ENCODE measurements at regions of chr12 and their contacts with region 1.

Region 1: DNA sequence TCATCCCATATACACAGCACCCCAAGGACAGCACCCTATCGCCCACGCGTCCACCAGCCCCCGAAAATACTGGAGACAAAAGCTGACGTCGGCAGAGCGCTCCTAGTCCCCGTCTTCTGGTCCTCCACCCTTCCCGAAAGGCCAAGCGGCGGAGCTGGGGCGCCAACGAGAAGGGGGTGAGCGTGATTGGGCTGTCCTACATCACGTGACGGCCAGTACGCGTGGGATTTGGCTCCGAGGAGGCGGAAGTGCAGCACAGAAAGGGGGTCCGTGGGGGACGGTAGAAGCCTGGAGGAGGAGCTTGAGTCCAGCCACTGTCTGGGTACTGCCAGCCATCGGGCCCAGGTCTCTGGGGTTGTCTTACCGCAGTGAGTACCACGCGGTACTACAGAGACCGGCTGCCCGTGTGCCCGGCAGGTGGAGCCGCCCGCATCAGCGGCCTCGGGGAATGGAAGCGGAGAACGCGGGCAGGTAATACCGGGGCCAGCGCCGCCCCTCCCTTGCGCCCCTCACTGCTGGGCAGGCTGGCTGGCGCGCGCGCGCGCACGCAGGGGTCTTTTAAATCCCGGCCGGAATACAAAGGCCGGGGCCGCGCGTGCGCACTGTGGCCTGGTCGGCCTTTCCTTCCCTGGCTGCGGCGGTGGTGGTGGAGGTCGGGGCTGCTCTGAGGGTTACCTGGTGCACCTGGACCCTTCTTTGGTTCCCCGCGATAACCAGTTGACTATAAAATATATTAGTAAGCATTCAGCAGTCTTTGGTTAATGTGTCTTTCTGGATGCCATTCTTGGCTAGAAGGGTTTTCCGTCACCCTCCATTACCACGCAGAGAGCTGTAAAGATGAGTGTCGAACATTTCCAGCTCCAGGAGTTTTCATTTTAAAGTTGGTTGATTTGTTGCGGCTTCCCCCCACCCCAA is at the start of gene TDG:
- DNase-seq: peak; percentile 90
- H3K4me3 ChIP-seq: peak within 1 kb of the TSS; percentile 98
- CTCF ChIP-seq: peak; percentile 0

Region 2: GRCh38 chr12:103495479-103496456 is 470.1 kb before region 1 on chr12 and contains the start of gene C12orf42:
- CTCF ChIA-PET with region 1: no interaction called
- POLR2A ChIA-PET with region 1: no interaction called
- DNase-seq: no peak
- H3K4me3 ChIP-seq: peak within 1 kb of the TSS; percentile 21; the same call in 1 of the 2 replicates
- CTCF ChIP-seq: peak; percentile 51

Region 3: GRCh38 chr12:103897316-103897715 is 68.5 kb before region 1 on chr12:
- CTCF ChIA-PET with region 1: no interaction called
- POLR2A ChIA-PET with region 1: no interaction called
- DNase-seq: no peak
- H3K4me3 ChIP-seq: no peak overlapping the region
- CTCF ChIP-seq: no peak

Region 4: DNA sequence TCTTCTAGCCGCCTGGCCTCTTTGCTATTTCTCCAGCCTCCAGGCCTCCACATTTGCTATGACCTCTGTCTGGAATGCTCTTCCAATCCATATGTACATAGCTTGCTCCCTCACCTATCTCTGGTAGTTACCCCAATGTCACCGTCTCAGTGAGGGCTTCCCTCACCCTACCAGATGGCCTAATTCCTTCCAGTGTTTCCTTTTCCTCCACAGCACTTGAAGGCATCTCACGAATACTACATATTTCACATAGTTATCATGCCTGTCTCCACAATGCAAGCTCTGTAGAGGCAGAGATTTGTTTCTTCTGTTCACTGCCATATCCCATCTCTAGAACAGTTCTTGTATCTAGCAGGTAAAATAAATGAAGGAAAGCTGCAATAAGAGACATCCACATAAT is 57.0 kb before region 1 on chr12:
- CTCF ChIA-PET with region 1: no interaction called
- POLR2A ChIA-PET with region 1: no interaction called
- DNase-seq: no peak
- H3K4me3 ChIP-seq: no peak overlapping the region
- CTCF ChIP-seq: no peak

Region 5: DNA sequence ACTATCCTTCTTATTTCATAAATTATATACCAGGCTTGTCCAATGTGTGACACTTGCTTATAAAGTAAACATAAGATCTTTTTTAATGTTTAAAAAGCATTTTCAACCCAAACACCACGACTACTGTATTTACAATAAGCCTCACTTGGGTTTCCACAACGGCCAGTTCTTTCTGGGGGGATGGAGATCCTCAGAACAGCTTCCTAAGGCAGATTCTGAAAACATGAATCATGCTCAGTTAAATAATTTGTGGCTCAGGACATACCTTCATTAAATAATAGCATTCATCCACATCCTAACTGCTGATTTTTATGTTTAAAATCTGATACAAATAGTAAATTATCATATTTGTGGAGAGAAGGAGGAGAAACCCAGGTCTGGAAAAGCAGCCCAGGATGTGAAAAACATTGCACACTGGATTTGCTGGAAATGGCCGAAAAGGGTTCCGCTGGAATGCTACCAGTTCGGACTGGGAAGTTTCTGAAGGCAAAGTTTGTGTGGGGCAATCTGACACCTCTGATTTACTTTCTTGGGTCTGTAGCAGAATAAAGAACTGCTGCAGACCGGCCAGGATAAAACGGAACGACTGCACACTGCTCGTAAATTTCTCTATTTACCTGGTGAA is 83.5 kb after region 1 on chr12:
- CTCF ChIA-PET with region 1: no interaction called
- POLR2A ChIA-PET with region 1: no interaction called
- DNase-seq: no peak
- H3K4me3 ChIP-seq: peak overlapping the region; percentile 67
- CTCF ChIP-seq: no peak

Region 6: DNA sequence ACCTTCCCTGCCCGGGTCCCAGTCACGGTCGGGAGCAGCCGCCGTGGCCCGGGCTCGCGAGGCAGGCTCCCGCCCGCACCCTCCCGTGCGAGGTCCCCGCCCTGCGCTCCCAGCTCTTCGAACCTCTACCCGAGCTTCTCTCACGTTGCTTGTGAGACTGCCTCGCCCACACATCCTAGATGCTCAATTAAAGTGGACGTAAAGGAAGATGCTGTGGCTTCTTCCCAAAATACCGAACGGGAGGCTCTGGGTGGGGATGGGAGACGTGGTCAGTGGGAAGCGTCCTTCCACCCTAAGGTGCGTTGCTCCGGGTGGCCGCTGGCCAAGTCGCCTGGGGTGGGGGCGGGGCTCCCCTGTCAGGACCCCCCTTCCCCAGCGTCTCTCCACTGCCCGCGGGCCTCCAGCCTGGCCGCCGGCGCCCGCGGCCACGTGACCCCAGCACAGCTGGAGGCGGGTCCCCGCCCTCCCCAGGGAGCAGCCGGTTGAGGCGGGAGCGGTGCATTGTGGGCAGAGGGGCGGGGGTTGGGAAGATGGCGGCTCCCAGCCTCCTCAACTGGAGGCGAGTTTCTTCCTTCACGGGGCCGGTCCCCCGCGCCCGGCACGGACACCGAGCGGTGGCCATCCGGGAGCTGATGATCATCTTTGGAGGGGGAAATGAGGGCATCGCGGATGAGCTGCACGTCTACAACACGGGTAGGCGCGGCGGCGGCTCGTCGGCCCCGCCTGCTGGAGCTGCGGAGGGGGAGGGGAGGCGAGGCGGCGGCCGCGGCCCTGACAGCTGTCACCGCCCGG is 98.4 kb after region 1 on chr12 and contains the start of gene HCFC2:
- CTCF ChIA-PET with region 1: no interaction called
- POLR2A ChIA-PET with region 1: interaction called, 10 read pairs
- DNase-seq: no peak
- H3K4me3 ChIP-seq: peak within 1 kb of the TSS; percentile 91
- CTCF ChIP-seq: no peak